ENCODE measurements at regions of chr16 and their contacts with region 1.

Region 1: DNA sequence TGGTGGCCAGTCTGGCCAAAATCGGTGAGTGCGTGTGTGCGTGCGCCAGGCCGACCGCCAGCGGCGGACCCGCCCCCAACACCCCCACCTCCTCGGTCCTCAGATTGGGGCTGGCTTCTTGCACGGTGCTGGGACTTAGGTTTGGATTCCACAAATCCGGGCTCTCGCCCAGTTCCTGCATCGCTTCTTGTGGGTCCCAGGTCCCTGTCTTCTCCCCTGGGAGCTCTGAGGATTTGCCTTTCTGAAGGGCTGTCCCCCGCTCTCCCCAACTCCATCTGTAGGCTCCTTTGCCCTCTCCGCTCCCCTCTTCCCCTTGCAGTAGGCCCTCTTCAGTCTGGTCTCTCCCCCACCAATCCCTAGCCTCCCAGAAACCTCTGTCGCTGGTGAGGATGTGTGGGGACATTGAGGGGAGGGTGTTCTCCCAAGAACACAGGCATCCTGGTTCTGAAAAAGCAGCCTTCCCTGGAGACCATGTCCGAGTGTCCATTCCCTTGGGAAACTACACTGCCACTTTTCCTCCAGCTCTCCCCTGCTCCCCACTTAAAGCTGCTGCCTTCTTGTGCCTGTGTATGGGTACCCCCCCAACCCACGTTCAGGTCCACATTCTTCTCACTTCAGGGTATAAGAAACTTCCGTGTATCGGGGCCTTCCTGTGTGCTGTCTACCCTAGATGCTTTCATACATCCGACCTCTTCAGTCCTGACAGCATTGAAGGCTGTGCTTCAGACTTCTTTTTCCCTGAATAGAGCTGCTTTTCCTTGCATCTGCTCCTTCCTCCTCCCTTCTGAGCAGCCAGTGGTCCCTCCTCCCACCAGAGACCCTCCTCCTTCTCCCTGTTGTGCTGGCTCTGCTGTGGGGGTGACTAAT is 632 bp downstream of the SLC9A5 start:
- DNase-seq: peak in 5 of 42 donors; percentile 15 to 39 (median 30)

Region 2: DNA sequence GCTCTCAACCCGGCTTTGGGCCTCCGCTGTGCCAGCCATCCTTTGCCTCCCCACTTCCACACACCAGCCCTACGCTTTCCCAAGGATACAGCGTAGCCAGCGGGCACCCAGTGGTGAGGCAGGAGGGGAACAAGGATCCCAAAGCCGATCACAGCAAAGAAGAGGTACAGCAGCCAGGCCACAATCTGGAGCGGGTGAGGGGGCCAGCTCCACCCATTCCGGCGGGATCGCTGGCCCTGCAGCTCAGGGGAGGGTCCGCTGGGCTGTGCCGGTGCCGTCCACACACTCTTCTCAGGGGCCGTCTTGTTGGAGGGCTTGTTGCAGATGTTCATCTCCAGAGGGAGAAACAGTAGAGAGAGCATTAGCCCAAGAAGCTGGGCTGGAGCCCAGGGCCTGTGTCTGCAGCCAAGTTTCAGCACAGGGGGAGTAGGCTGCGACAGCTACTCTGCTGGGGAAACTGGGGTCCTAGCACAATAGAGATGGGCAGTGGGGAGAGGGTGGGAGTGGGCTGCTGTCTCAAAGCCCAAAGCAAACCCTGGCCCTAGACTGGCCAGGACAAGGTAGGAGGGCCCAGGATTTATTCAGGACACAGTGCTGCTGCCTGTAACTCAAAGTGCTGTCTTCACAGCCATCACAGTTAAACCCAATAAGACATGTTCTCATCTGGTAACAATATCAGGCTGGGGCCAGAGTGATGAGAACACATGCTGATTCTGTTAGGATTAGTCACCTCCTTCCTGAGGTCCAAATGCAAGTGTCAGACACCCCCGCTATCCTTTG is 156.9 kb after region 1 on chr16:
- intact Hi-C with region 1: loop called (anchors 10 kb)
- DNase-seq: peak in 2 of 42 donors; percentile 32 to 51